Activated CD4-positive, alpha-beta memory T cell treated with anti-CD3 and anti-CD28 coated beads, Interleukin-2, amount 10 ng/mL, durations not matched to agents 7 days and 5 days (primary cell): ENCODE measurements at regions of chr12 and their contacts with region 1.

Region 1: GRCh38 chr12:14769969-14770495 is 33.2 kb downstream of the WBP11 start:
- DNase-seq: peak; percentile 86
- H3K4me3 Mint-ChIP-seq: peak overlapping the region; percentile 90
- H3K27ac Mint-ChIP-seq: peak overlapping the region; percentile 98
- H3K4me1 Mint-ChIP-seq: peaks cover 47% of the 10 kb centered on the region
- H3K27me3 Mint-ChIP-seq: no peaks in the 10 kb centered on the region

Region 2: GRCh38 chr12:14257734-14258574 is 512.1 kb before region 1 on chr12:
- CTCF ChIA-PET with region 1: no interaction called
- POLR2A ChIA-PET with region 1: interaction called, 11 read pairs
- DNase-seq: peak; percentile 95
- H3K4me3 Mint-ChIP-seq: peak overlapping the region; percentile 55
- H3K27ac Mint-ChIP-seq: peak overlapping the region; percentile 100
- H3K4me1 Mint-ChIP-seq: peaks cover 51% of the 10 kb centered on the region
- H3K27me3 Mint-ChIP-seq: no peaks in the 10 kb centered on the region

Region 3: DNA sequence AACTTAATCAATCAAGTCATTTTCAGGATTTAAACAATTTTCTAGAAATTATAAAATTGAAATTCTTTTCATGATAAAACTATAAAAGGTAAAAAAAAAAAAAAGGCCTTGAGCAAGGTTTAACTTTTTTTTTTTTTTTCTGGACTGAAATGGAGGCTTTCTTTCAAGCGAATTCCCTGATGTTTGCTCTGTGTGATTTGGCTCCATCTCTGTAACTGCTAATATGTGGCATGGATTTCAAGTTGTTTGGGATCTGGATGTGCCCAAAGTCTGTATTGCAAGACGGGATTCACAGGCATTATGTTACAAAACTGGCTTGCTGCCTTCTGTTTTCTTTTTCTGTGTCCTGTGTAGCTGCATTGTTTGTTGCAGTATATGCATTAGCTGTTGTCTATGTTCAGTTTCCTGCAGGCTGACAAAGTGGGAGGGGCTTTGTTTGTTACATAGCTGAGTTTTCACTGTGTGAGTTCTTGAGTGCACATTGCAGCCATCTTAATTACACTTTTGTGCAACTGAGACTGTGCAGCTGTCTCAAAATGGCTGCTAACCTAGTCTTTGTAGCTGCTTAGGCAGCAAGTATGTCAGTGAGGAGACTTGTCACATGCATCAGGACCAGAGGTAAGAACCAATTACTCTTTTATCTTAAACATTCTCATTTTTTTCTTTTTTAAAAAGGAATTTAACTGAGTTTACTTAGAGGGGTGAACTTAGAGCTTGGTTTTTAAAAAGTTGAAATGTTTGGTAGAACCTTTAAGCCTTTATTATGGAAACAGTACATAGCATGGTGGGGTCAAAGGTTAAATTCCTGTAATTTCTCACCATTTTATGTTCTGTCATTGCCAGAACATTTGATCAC is 385.0 kb before region 1 on chr12:
- CTCF ChIA-PET with region 1: interaction called, 4 read pairs
- POLR2A ChIA-PET with region 1: interaction called, 41 read pairs
- DNase-seq: peak; percentile 81
- H3K4me3 Mint-ChIP-seq: peak overlapping the region; percentile 74
- H3K27ac Mint-ChIP-seq: peak overlapping the region; percentile 95
- H3K4me1 Mint-ChIP-seq: peaks cover 53% of the 10 kb centered on the region
- H3K27me3 Mint-ChIP-seq: no peaks in the 10 kb centered on the region

Region 4: GRCh38 chr12:14514154-14514842 is 255.7 kb before region 1 on chr12:
- CTCF ChIA-PET with region 1: no interaction called
- POLR2A ChIA-PET with region 1: no interaction called
- DNase-seq: no peak
- H3K4me3 Mint-ChIP-seq: no peak overlapping the region
- H3K27ac Mint-ChIP-seq: no peak overlapping the region
- H3K4me1 Mint-ChIP-seq: no peaks in the 10 kb centered on the region
- H3K27me3 Mint-ChIP-seq: no peaks in the 10 kb centered on the region

Region 5: GRCh38 chr12:14545144-14546124 is 224.6 kb before region 1 on chr12:
- CTCF ChIA-PET with region 1: no interaction called
- POLR2A ChIA-PET with region 1: no interaction called
- DNase-seq: no peak
- H3K4me3 Mint-ChIP-seq: no peak overlapping the region
- H3K27ac Mint-ChIP-seq: no peak overlapping the region
- H3K4me1 Mint-ChIP-seq: no peaks in the 10 kb centered on the region
- H3K27me3 Mint-ChIP-seq: no peaks in the 10 kb centered on the region

Region 6: GRCh38 chr12:14691560-14691959 is 78.5 kb before region 1 on chr12:
- CTCF ChIA-PET with region 1: no interaction called
- POLR2A ChIA-PET with region 1: no interaction called
- DNase-seq: no peak
- H3K4me3 Mint-ChIP-seq: no peak overlapping the region
- H3K27ac Mint-ChIP-seq: no peak overlapping the region
- H3K4me1 Mint-ChIP-seq: no peaks in the 10 kb centered on the region
- H3K27me3 Mint-ChIP-seq: no peaks in the 10 kb centered on the region

Region 7: DNA sequence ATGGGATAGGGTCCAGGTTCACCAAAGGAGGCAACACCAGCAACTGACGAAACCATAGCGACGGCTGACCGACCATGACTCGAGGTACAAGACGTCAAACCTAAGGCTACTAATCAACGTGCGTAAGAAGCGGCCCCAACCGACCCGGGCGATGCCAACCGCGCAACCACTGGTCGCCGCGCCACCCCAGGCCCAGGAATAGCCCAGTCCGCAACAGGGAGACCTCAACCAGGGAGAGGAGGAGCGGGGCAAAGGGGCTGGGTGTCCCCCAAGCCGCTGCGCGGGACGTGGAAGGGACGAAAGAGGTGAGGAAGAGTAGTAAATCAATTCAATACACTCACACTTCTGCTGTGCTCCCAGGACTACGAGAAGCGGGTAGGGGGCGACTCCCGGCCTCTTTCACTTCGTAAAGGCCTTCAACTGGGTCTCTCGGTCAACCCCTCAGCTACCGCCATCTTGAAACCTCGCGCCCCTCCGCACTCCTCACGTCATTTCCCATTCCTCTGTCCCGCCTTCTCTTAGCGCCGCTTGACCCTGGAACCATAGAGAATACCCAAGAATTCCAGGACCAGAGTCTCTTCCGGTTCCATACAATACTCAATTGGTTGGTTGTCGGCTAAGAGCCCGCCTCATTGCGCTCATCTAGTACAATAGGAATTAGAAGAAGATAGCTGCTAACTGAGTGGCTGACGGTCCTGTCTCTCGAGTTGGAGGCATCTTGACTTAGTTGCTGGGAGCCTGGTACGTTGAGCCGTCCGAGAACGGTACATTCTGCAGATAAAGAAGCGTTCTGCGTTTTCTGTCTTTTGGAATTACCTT is 33.2 kb after region 1 on chr12 and contains the starts of genes C12orf60 and WBP11:
- CTCF ChIA-PET with region 1: interaction called, 50 read pairs
- POLR2A ChIA-PET with region 1: interaction called, 177 read pairs
- DNase-seq: peak; percentile 89
- H3K4me3 Mint-ChIP-seq: no peak within 1 kb of the TSS
- H3K27ac Mint-ChIP-seq: no peak within 1 kb of the TSS
- H3K4me1 Mint-ChIP-seq: peaks cover 27% of the 10 kb centered on the region
- H3K27me3 Mint-ChIP-seq: no peaks in the 10 kb centered on the region
- total RNA-seq, gene C12orf60: 2.0 to 2.4 TPM
- total RNA-seq, gene WBP11: 91.1 to 92.7 TPM

Region 8: GRCh38 chr12:14884458-14884878 is 114.4 kb after region 1 on chr12:
- CTCF ChIA-PET with region 1: no interaction called
- POLR2A ChIA-PET with region 1: no interaction called
- DNase-seq: peak; percentile 69
- H3K4me3 Mint-ChIP-seq: no peak overlapping the region
- H3K27ac Mint-ChIP-seq: no peak overlapping the region
- H3K4me1 Mint-ChIP-seq: peaks cover 18% of the 10 kb centered on the region
- H3K27me3 Mint-ChIP-seq: peaks cover 39% of the 10 kb centered on the region

Region 9: GRCh38 chr12:14948672-14949071 is 178.6 kb after region 1 on chr12:
- CTCF ChIA-PET with region 1: interaction called, 7 read pairs
- POLR2A ChIA-PET with region 1: interaction called, 24 read pairs
- DNase-seq: peak; percentile 66
- H3K4me3 Mint-ChIP-seq: peak overlapping the region; percentile 76
- H3K27ac Mint-ChIP-seq: peak overlapping the region; percentile 96
- H3K4me1 Mint-ChIP-seq: peaks cover 88% of the 10 kb centered on the region
- H3K27me3 Mint-ChIP-seq: no peaks in the 10 kb centered on the region

Region 10: DNA sequence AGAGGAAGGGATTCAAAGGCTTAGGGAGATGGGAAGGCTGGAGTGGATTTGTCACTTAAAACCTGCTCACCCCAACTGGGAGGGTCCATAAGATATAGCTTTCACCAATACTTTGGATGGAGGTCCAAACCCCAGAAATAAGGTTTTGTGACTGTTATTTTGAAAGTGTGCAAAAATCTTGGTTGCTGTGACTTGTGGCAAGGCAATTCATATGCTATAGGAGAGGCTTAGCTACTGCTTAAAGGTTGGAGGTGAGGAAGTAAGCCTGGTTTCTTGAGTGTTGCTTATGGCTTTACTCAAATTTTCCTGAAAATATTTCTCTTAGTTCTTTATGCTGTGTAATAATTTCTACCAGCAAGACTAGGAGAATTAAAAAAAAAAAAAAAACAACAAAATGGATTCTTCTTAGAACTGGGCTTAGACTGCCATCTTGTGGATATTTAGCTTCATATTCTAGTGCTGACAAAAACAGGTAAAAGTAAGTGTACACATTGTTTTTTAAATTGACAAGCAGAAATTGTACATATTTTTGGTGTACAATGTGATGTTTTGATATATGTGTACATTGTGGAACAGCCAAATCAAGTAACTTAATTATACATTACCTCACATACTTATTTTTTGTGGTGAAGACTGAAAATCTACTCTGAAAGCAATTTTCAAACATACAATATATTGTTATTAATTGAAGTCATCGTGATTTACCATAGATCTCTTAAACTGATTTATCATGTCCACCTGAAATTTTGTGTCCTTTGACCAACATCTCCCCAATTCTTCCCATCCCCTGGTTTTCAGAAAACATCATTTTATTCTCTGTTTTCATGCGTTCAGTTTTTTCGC is 225.8 kb after region 1 on chr12:
- CTCF ChIA-PET with region 1: interaction called, 27 read pairs
- POLR2A ChIA-PET with region 1: interaction called, 5 read pairs
- DNase-seq: no peak
- H3K4me3 Mint-ChIP-seq: no peak overlapping the region
- H3K27ac Mint-ChIP-seq: no peak overlapping the region
- H3K4me1 Mint-ChIP-seq: peaks cover 24% of the 10 kb centered on the region
- H3K27me3 Mint-ChIP-seq: peaks cover 23% of the 10 kb centered on the region